Activated CD4-positive, alpha-beta T cell treated with anti-CD3 and anti-CD28 coated beads for 36 hours (primary cell): ENCODE measurements at regions of chr7 and their contacts with region 1.

Region 1: DNA sequence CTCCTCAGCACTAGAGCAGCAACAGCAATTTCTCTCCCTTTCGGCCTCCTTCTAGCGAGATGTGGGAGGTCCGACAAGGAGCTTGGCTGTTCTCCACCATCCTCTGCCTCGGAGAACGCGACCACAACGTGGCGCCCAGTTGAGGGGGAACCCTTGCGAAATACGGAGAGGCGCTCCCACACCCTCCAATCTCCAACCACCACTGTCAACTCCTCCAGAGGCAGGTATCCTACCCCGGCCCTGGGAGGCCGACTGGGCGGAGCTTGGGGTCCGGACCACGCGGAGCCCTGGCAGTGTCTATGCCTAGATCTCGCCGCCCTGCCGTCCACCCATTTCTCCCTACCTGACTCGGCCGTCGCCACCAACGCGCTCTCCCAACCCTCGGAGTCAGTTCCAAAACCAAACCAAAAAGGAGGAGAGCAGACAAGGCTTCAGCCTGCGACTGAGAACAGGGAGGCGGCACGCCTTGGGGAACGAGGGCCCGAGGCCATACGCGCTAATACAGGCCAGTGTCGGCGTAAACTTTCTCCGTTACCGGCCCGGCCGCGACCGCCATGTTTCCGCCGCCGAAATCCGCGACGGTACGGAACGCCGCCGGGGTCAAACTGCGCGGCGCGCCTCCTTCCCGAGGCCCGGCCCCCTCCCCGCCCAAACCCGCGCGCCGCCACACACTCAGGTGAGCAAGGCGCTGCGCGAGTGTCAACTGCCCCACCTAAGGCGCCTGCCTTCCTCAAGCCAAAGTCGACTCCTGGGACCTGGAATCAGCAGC is at the start of gene TMEM168:
- DNase-seq: peak; percentile 93
- ATAC-seq: peak; percentile 85
- H3K4me3 Mint-ChIP-seq: peak within 1 kb of the TSS; percentile 86
- H3K27ac Mint-ChIP-seq: peak within 1 kb of the TSS; percentile 96
- H3K4me1 Mint-ChIP-seq: peaks cover 44% of the 10 kb centered on the region
- H3K27me3 Mint-ChIP-seq: no peaks in the 10 kb centered on the region
- total RNA-seq, gene TMEM168: 16.7 to 18.3 TPM

Region 2: GRCh38 chr7:112556633-112557032 is 233.4 kb before region 1 on chr7:
- CTCF ChIA-PET with region 1: no interaction called
- POLR2A ChIA-PET with region 1: no interaction called
- intact Hi-C with region 1: loop called (anchors 5 to 10 kb)
- DNase-seq: peak; percentile 21
- ATAC-seq: peak; percentile 97
- H3K4me3 Mint-ChIP-seq: no peak overlapping the region
- H3K27ac Mint-ChIP-seq: no peak overlapping the region
- H3K4me1 Mint-ChIP-seq: peaks cover 19% of the 10 kb centered on the region
- H3K27me3 Mint-ChIP-seq: no peaks in the 10 kb centered on the region

Region 3: DNA sequence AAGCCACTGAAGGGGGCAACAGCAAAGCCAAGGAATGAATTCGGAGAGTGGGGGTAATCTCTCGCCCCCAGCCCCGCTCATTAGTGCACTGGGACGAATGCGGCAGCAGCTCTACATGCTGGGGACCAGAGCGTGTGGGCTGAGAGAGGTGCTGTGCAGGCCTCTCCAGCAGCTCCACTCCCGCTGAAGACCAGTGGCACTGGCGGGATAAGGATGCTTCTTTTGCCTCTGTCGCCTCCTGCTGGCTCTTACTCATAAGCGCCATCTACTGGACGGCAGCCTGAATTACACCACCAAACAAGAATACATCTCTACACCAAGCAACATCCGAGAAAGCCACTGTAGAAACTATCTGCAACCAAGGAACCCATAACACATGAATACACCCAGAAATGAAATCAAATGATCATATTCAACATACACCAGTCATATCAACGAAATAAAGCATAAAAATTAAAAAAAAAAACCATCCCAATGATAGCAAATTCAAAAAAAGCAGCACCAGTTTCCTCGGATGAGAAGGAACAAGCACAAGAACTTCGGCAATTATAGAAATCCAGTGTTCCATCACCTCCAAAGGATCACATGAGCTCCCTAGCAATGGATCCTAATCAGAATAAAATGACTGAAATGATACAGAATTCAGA is 79.2 kb after region 1 on chr7:
- CTCF ChIA-PET with region 1: no interaction called
- POLR2A ChIA-PET with region 1: no interaction called
- intact Hi-C with region 1: loop called in 1 of 2 experiments (anchors 5 kb)
- DNase-seq: peak; percentile 73
- ATAC-seq: peak; percentile 63
- H3K4me3 Mint-ChIP-seq: no peak overlapping the region
- H3K27ac Mint-ChIP-seq: no peak overlapping the region
- H3K4me1 Mint-ChIP-seq: peaks cover 19% of the 10 kb centered on the region
- H3K27me3 Mint-ChIP-seq: no peaks in the 10 kb centered on the region

Region 4: GRCh38 chr7:112939574-112940314 is 149.7 kb after region 1 on chr7:
- CTCF ChIA-PET with region 1: interaction called, 5 read pairs
- POLR2A ChIA-PET with region 1: no interaction called
- intact Hi-C with region 1: loop called (anchors 1 to 2 kb)
- DNase-seq: peak; percentile 99
- ATAC-seq: peak; percentile 97
- H3K4me3 Mint-ChIP-seq: peak overlapping the region; percentile 80
- H3K27ac Mint-ChIP-seq: peak overlapping the region; percentile 96
- H3K4me1 Mint-ChIP-seq: peaks cover 28% of the 10 kb centered on the region
- H3K27me3 Mint-ChIP-seq: no peaks in the 10 kb centered on the region

Region 5: DNA sequence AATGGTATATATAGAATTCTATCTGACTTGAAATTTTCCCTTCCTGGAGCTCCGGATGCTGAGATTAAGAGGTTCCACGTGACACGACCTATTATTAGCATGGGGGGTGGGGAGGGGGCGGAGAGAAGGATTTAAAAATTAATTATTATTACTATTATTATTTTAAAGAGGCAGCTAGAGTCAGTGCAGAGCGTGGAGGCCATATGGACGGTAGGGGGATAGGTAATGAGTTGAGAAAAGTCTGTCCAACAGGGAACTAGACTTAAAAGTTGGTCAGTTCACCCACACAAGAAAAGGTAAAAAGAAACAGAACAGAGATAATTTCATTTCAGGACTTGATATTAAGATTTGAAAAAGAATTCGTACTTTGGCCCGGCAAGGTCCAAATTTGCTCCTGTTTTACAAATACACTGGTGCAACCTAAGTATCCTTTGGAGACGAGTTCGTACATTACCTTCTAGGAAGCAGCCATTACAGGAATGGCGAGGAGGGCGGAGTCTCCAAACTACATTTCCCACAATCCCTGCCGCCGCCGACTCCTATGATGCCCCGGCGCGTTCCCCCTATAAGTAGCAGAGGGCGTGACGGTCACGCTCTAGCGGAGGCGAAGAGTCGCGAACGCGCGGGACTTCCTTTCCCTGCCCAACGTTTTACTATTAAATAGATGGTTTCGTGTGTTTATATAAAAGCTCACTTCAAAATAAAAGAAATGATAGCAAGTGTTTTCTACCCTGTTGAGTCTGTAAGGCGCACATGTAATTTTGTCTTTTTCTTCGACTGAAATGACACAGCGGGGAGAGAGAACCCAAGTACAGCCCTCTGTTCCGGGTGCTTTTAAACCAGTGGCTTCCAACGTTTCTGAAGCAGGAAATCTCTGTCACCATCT is 328.3 kb after region 1 on chr7 and contains the start of gene SMIM30:
- CTCF ChIA-PET with region 1: interaction called, 3 read pairs
- POLR2A ChIA-PET with region 1: no interaction called
- intact Hi-C with region 1: loop called (anchors 1 to 2 kb)
- DNase-seq: peak; percentile 93
- ATAC-seq: peak; percentile 95
- H3K4me3 Mint-ChIP-seq: peak within 1 kb of the TSS; percentile 80
- H3K27ac Mint-ChIP-seq: peak within 1 kb of the TSS; percentile 82
- H3K4me1 Mint-ChIP-seq: peaks cover 34% of the 10 kb centered on the region
- H3K27me3 Mint-ChIP-seq: no peaks in the 10 kb centered on the region
- total RNA-seq, gene SMIM30: 36.0 to 38.5 TPM